Activated CD8-positive, alpha-beta memory T cell treated with anti-CD3 and anti-CD28 coated beads, Interleukin-2, amount 10 ng/mL, durations not matched to agents 7 days and 5 days (primary cell): ENCODE measurements at regions of chr3 and their contacts with region 1.

Region 1: DNA sequence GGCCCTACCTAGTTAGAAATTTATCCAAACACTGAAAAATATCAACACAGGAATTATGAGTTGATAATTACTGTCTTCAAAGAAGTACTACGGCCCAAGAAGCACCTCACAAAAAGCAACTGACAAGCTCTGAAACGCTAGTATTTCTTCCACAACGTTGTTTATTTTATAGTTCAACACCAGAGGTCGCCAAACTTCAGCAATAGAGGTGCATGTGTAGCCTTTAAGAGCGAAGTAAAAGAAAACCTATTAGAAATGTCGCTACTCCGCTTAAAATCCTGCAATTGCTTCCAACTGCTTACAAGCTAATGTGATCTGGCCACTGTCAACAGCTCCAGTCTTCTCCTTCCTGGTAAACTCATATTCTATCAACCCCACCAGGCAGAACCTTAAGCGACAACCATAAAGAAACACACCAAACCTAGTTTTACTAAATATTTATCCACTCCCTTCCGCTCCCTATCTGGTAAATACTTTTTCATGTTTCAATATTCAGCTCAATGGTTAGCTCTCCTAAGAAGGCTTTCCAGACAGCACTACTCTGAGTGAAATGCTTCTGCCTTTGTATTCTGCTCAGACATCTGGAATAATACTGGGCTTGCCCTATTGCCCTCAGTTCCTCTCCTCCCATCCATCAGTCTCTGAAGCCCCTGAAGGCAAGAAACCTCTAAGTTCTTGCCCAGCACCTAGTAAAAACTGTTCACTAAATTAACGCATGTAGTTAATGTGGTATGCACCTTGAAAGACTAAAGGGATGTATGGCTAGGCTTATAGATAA is 110.2 kb downstream of the NR1I2 start:
- DNase-seq: peak; percentile 52
- ATAC-seq: peak; percentile 68
- H3K4me3 Mint-ChIP-seq: no peak overlapping the region
- H3K27ac Mint-ChIP-seq: no peak overlapping the region
- H3K4me1 Mint-ChIP-seq: peaks cover 7% of the 10 kb centered on the region
- H3K27me3 Mint-ChIP-seq: no peaks in the 10 kb centered on the region

Region 2: DNA sequence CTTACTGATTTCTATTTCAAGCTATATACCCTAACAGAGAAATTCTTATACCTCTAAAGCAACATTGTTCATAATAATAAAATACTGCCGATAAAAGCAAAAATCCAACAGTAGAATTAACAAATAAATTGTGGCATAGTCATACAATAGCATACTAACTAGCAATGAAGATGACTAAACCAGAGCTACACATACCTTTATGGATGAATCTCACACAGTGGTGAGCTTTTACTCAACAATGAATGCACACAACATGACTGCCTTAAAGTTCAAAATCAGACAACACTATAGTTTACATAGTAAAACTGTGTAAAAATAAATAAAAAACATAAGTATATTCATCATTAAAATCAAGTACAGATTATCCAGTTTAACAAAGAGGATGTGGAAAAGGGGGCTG is 11.2 kb before region 1 on chr3:
- CTCF ChIA-PET with region 1: interaction called, 11 read pairs
- DNase-seq: no peak
- ATAC-seq: no peak
- H3K4me3 Mint-ChIP-seq: no peak overlapping the region
- H3K27ac Mint-ChIP-seq: no peak overlapping the region
- H3K4me1 Mint-ChIP-seq: peaks cover 4% of the 10 kb centered on the region
- H3K27me3 Mint-ChIP-seq: no peaks in the 10 kb centered on the region

Region 3: DNA sequence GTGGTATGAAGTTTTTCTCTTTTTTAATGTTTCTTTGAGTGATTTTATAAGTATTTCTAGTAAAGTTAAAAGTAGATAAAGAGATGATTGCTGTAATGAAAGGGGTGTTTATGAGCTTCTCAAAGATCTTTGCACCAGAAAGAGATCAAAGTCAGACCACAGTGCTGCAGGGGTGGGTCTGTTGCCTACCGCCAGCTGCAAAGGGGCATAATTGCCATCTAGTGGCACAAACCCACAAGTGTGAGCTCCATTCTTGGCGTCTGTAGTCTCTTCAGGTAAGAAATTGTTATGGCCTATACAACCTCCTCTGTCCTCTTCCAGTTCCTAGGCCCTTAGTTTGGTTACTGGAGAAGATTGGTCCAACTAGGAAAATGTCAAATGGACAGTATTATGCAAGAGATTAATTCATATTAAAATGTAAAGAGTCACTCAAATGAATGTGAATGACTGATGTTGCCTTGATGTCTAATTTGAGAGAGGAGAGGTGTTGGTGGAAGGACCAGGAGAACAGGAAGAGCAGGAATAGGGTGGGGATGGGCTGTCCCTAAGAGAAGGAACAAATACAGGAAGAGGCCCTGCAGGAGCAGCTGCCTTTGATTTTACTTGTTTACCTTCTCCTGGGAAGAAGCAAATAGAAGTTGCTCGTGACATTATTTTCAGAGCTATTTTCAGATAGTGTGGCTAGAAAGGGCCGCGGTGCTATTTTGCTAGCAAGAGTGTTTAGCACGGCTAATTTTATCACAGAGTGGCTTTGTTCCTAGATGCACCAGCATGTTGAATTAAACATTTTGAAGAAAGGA is 255.1 kb after region 1 on chr3:
- CTCF ChIA-PET with region 1: interaction called, 10 read pairs
- DNase-seq: no peak
- ATAC-seq: no peak
- H3K4me3 Mint-ChIP-seq: no peak overlapping the region
- H3K27ac Mint-ChIP-seq: no peak overlapping the region
- H3K4me1 Mint-ChIP-seq: peaks cover 15% of the 10 kb centered on the region
- H3K27me3 Mint-ChIP-seq: no peaks in the 10 kb centered on the region